ENCODE measurements at regions of chrX and their contacts with region 1.

Region 1: DNA sequence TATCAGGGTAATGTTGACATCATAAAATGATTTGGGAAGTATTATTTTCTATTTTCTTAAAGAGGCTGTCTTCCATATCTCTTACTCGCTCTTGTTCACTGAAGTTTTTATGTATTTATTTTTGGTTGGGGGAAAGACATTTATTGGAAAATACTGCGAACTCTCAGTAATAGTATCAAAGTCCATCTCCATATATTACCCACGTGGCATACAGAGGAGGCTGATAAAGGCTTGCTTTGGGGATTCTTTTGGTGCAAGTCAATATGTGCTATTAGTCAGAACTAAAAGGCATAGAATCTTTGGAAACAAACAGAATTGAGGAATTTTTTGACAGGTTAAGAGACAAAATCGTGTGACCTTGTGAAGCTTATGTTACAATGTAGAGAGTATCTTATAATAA is 101.3 kb downstream of the NYX start:
- DNase-seq: no peak

Region 2: DNA sequence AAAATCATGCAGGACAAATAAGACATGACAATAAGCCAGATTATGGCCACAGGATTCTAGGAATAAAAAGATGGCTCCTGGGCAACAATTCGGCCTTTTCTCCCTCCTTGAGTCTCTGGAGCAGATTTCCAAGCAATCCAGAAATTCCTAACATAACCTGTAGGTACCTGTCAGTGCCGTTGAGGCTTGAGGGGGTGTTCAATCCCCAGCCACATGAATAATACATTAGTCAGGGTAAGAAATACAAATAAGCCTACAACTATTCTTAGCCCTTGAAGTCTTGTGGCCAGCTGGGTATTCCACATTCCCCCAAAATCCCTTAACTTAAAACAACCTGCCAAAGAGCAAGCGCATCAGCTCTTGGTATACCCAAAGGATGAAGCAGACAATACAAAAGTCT is 910.7 kb before region 1 on chrX:
- intact Hi-C with region 1: loop called in 1 of 2 experiments (anchors 5 kb)
- DNase-seq: no peak

Region 3: GRCh38 chrX:41468647-41469323 is 79.6 kb before region 1 on chrX:
- intact Hi-C with region 1: no loop called
- DNase-seq: no peak

Measured in posterior vena cava (tissue), 2 donors.